ENCODE measurements at regions of chr1 and their contacts with region 1.

Region 1: DNA sequence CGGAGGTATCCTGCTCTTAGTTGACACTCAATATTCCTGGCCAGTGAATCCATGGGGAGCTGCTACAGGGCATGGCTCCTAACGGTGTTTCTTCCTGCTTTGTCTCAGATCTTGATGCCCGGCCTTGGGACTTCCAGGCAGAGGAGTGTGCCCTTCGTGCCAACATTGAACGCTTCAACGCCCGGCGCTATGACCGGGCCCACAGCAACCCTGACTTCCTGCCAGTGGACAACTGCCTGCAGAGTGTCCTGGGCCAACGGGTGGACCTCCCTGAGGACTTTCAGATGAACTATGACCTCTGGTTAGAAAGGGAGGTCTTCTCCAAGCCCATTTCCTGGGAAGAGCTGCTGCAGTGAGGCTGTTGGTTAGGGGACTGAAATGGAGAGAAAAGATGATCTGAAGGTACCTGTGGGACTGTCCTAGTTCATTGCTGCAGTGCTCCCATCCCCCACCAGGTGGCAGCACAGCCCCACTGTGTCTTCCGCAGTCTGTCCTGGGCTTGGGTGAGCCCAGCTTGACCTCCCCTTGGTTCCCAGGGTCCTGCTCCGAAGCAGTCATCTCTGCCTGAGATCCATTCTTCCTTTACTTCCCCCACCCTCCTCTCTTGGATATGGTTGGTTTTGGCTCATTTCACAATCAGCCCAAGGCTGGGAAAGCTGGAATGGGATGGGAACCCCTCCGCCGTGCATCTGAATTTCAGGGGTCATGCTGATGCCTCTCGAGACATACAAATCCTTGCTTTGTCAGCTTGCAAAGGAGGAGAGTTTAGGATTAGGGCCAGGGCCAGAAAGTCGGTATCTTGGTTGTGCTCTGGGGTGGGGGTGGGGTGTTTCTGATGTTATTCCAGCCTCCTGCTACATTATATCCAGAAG is 16.7 kb downstream of the ALX3 start:
- DNase-seq: peak; percentile 74
- ATAC-seq: peak; percentile 77
- H3K4me3 ChIP-seq: no peak overlapping the region
- H3K4me3 Mint-ChIP-seq: no peak overlapping the region
- H3K27ac ChIP-seq: no peak overlapping the region
- H3K27ac Mint-ChIP-seq: peak overlapping the region; percentile 21
- H3K4me1 ChIP-seq: no peaks in the 10 kb centered on the region
- H3K4me1 Mint-ChIP-seq: no peaks in the 10 kb centered on the region
- H3K27me3 ChIP-seq: no peaks in the 10 kb centered on the region
- H3K27me3 Mint-ChIP-seq: no peaks in the 10 kb centered on the region
- CTCF ChIP-seq: peak; percentile 97

Region 2: DNA sequence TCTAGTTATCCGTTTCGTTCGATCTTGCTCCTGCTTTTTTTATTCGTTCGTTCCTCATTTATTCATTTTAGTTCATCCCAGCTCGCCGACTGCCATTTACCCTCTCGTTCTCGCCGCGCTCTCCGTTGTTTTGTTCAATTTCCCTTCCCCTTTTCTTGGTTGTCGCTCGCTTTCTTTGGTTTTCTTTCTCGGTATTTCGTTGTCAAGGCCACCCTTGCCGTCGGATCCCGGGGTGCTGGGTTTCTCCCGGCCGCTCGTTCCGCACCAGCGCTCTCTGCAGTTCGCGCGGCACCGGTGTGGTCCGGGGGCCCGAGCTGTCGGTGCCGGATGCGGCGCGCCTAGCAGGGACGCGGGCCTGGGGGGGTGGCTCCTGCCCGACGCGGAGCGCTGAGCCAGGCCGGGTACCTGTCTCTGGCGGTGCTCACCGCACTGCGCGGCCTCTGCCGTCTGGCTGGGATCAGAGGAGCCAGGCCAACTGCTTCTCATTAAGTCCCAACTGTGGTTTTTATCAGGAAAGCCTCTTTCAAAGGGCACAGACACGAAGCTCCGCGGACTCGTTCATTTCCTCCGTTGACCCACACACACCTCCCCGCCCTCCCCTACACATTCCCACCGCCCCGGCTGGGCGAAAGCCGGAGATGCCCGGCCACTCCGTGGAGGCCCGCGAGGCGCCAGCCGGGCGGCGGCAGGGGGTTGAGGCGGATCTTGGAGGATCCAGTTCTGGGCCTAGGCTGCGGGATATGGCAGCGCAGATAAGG is 15.0 kb after region 1 on chr1:
- CTCF ChIA-PET with region 1: interaction called, 13 read pairs
- POLR2A ChIA-PET with region 1: interaction called, 6 read pairs
- intact Hi-C with region 1: no loop called
- DNase-seq: peak; percentile 78
- ATAC-seq: peak; percentile 47
- H3K4me3 ChIP-seq: peak overlapping the region; percentile 9 to 61 (median 47)
- H3K4me3 Mint-ChIP-seq: peak overlapping the region; percentile 94
- H3K27ac ChIP-seq: no peak overlapping the region
- H3K27ac Mint-ChIP-seq: peak overlapping the region; percentile 71
- H3K4me1 ChIP-seq: peaks cover 34 to 40% of the 10 kb centered on the region in 2 donors
- H3K4me1 Mint-ChIP-seq: peaks cover 25% of the 10 kb centered on the region
- H3K27me3 ChIP-seq: peaks cover 0 to 64% (median 44%) of the 10 kb centered on the region in 4 experiments
- H3K27me3 Mint-ChIP-seq: peaks cover 62% of the 10 kb centered on the region
- CTCF ChIP-seq: no peak

Measured in B cell (primary cell).